CD8-positive, alpha-beta T cell (primary cell): ENCODE measurements at regions of chr14 and their contacts with region 1.

Region 1: GRCh38 chr14:96501742-96502617 is at the start of gene PAPOLA:
- DNase-seq: peak; percentile 88 to 98 (median 95)
- ATAC-seq: peak; percentile 85
- H3K4me3 ChIP-seq: peak within 1 kb of the TSS; percentile 89 to 92
- H3K4me3 Mint-ChIP-seq: peak within 1 kb of the TSS; percentile 93
- H3K27ac ChIP-seq: peak within 1 kb of the TSS; percentile 81 to 95
- H3K27ac Mint-ChIP-seq: peak within 1 kb of the TSS; percentile 99
- H3K4me1 ChIP-seq: peaks cover 46% of the 10 kb centered on the region
- H3K4me1 Mint-ChIP-seq: peaks cover 49% of the 10 kb centered on the region
- H3K27me3 ChIP-seq: no peaks in the 10 kb centered on the region
- H3K27me3 Mint-ChIP-seq: peaks cover 4% of the 10 kb centered on the region
- CTCF ChIP-seq: no peak
- total RNA-seq, gene PAPOLA: 164 to 176 TPM

Region 2: DNA sequence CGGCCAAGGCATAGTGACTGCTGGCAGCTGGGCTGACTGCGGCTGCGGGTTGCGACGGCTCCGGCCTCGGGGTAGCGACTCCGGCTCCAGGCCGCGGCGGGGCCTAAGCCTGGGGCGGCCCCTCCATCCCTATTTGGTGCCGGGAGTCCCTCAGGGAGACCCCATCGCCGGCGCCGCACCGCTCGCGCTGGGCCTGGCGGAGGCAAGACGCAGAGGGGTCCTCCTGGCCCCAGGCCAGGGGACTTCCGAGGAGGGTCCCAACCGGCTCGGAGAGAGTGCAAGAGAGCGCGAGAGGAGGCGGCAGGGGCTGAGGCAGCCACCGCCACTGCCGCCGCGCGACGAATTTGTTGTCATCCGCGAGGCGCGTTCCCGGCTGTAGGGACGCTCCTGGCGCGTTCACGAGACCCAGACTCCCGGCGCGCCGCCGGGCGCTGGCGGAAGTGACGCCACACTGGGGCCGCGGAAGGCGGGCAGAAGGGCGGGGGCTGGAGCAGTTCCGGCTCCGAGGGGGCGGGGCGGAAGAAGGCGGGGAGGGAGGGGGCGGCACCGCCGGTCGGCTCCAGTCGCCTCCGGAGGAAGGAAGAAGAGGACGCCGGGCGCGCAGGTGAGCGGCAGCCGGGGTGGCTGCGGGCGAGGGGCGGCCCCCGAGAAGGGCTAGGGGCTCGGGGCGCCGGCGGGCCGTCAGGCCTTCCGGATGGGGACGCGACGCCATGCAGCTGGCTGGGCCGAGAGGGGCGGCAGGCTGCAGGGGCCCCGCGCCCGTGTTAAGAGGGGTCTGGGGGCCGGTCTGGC is 138.8 kb before region 1 on chr14 and contains the starts of genes ATG2B and GSKIP:
- CTCF ChIA-PET with region 1: no interaction called
- POLR2A ChIA-PET with region 1: no interaction called
- intact Hi-C with region 1: loop called (anchors 1 kb)
- DNase-seq: peak; percentile 95 to 99 (median 98)
- ATAC-seq: peak; percentile 84
- H3K4me3 ChIP-seq: peak within 1 kb of the TSS; percentile 87 to 97
- H3K4me3 Mint-ChIP-seq: peak within 1 kb of the TSS; percentile 89
- H3K27ac ChIP-seq: peak within 1 kb of the TSS; percentile 89 to 93
- H3K27ac Mint-ChIP-seq: peak within 1 kb of the TSS; percentile 89
- H3K4me1 ChIP-seq: peaks cover 28% of the 10 kb centered on the region
- H3K4me1 Mint-ChIP-seq: peaks cover 59% of the 10 kb centered on the region
- H3K27me3 ChIP-seq: no peaks in the 10 kb centered on the region
- H3K27me3 Mint-ChIP-seq: no peaks in the 10 kb centered on the region
- CTCF ChIP-seq: no peak
- total RNA-seq, gene ATG2B: 16.0 to 17.9 TPM
- total RNA-seq, gene GSKIP: 9.4 to 13.5 TPM

Region 3: DNA sequence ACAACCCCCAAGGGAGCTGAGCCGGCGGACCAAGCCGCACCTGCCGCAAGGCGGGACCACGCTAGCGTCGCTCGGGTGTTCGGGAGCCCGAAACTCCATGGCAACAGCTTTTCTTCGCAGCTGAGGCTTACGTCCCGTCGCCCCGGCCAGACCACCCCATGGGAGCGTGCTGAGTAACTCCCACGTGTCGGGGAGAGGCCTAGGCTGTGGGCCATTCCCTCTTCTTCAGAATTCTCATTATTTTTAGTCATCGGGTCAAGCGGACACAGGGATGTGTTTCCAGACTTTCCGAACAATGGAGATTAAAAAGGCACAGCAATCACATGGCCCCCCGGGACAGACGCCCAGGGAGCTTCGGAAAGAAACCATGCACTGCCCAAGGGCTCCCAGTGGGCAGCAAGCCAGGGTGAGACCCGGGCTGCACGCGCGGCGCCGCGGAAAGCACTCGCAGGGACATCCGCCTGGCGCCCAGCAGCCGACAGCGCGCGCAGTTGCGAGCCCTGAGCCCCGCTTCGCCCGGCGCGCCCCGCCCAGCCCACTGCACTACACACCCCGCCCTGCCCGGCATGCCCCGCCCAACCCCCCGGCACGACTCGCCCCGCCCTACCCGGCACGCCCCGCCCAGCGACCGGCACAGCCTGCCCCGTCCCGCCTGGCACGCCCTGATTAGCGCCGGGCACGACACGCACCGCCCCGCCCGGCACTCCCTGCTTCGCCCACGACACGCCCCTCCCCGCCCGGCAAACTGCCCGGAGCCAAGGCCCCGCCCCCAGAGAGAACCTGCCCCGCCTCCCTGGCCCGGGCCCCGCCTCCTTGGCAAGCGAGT is 110.5 kb before region 1 on chr14:
- CTCF ChIA-PET with region 1: no interaction called
- POLR2A ChIA-PET with region 1: no interaction called
- intact Hi-C with region 1: loop called (anchors 1 to 5 kb)
- DNase-seq: peak; percentile 97 to 100 (median 100)
- ATAC-seq: peak; percentile 94
- H3K4me3 ChIP-seq: peak overlapping the region; percentile 92
- H3K4me3 Mint-ChIP-seq: peak overlapping the region; percentile 90
- H3K27ac ChIP-seq: peak overlapping the region; percentile 57 to 64
- H3K27ac Mint-ChIP-seq: peak overlapping the region; percentile 49
- H3K4me1 ChIP-seq: peaks cover 12% of the 10 kb centered on the region
- H3K4me1 Mint-ChIP-seq: peaks cover 12% of the 10 kb centered on the region
- H3K27me3 ChIP-seq: no peaks in the 10 kb centered on the region
- H3K27me3 Mint-ChIP-seq: no peaks in the 10 kb centered on the region
- CTCF ChIP-seq: no peak

Region 4: DNA sequence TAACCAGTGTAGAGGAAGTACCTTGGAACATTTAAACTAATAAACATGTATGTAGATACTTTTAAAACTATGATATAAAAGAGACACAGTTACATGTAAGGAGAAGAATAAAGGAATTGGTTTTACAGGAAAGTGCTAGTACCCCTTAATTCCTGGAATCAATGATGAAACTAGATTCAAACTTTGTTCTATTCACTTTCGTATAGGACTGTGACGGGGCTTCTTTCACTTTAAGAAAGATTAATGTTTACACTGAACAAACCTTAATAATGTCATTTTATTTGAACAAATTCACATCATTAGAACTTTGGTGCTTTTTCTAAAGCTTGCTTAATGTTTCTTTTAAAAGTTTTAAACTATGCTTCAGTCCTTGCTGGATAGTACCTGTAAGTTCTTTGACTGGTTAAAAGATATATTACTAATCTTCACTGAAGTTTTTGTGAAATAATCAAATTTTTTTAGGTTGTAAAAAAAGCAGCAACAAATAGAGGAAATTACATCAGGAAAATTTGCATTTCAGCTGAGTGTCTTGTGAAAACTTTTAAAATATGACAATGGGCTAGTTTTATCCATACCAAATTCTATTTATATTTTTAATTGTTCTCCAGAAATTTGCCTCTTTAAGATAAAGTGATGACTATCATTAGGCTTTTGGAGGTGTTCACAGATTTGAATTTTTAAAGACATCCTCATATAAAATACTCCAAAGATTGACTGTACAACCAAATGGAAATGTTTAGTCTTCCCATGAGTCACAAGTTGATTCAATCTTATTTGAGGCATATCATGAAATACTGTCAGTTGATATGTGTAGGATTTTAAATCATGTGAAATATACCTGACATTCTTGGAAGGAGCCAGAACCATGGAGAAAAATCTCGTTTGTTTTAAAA is 36.4 kb after region 1 on chr14:
- CTCF ChIA-PET with region 1: no interaction called
- POLR2A ChIA-PET with region 1: no interaction called
- intact Hi-C with region 1: loop called in 1 of 2 experiments (anchors 5 kb)
- DNase-seq: no peak
- ATAC-seq: no peak
- H3K4me3 ChIP-seq: no peak overlapping the region
- H3K4me3 Mint-ChIP-seq: no peak overlapping the region
- H3K27ac ChIP-seq: no peak overlapping the region
- H3K27ac Mint-ChIP-seq: no peak overlapping the region
- H3K4me1 ChIP-seq: no peaks in the 10 kb centered on the region
- H3K4me1 Mint-ChIP-seq: no peaks in the 10 kb centered on the region
- H3K27me3 ChIP-seq: no peaks in the 10 kb centered on the region
- H3K27me3 Mint-ChIP-seq: no peaks in the 10 kb centered on the region
- CTCF ChIP-seq: no peak